Activated B cell treated with CpG ODN at 0.5 μM for 24 hours (primary cell): ENCODE measurements at regions of chr1 and their contacts with region 1.

Region 1: GRCh38 chr1:235933017-235933765 is 66.5 kb upstream of the LYST start:
- DNase-seq: no peak
- ATAC-seq: no peak
- H3K4me3 Mint-ChIP-seq: peak overlapping the region; percentile 62
- H3K27ac Mint-ChIP-seq: peak overlapping the region; percentile 72
- H3K4me1 Mint-ChIP-seq: peaks cover 91% of the 10 kb centered on the region
- H3K27me3 Mint-ChIP-seq: no peaks in the 10 kb centered on the region
- CTCF ChIP-seq: no peak

Region 2: DNA sequence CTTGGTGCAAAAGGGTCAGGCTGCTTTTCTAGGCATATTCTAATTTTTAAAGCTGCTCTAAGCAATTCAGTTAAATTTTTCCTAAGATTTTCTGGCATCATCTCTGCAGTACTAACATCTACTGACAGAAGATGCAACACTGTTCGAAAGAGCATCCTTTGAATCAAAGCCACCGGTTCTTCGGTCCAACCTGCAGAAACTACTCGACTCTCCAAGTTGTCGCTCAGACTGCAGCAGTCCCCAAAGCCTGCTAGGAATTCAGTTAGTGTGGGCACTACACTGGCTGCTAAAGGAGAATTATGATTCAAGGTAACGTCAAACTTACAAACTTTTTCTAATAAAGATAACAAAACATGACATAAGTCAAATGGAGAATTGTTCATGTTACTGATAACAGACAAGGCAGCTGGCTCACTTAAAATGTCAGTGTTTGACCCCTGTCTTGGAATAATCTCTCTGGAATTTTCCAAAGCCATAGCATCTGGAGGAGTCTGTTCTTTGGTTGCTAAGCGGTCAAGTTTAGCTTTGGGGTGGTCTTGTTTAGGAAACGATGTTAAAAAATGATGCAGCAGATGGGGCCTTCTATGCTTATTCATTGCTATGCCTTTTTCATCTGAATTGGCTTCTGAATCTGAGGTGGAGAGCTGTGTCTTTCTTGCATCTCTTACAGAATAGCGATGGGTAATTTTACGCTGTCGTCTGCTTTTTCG is 123.3 kb before region 1 on chr1:
- CTCF ChIA-PET with region 1: no interaction called
- POLR2A ChIA-PET with region 1: no interaction called
- intact Hi-C with region 1: no loop called
- DNase-seq: no peak
- ATAC-seq: no peak
- H3K4me3 Mint-ChIP-seq: no peak overlapping the region
- H3K27ac Mint-ChIP-seq: no peak overlapping the region
- H3K4me1 Mint-ChIP-seq: no peaks in the 10 kb centered on the region
- H3K27me3 Mint-ChIP-seq: no peaks in the 10 kb centered on the region
- CTCF ChIP-seq: no peak

Region 3: GRCh38 chr1:235883261-235883927 is 49.8 kb before region 1 on chr1:
- CTCF ChIA-PET with region 1: no interaction called
- POLR2A ChIA-PET with region 1: no interaction called
- intact Hi-C with region 1: loop called (anchors 2 kb)
- DNase-seq: no peak
- ATAC-seq: peak; percentile 15
- H3K4me3 Mint-ChIP-seq: no peak overlapping the region
- H3K27ac Mint-ChIP-seq: no peak overlapping the region
- H3K4me1 Mint-ChIP-seq: peaks cover 59% of the 10 kb centered on the region
- H3K27me3 Mint-ChIP-seq: no peaks in the 10 kb centered on the region
- CTCF ChIP-seq: no peak

Region 4: DNA sequence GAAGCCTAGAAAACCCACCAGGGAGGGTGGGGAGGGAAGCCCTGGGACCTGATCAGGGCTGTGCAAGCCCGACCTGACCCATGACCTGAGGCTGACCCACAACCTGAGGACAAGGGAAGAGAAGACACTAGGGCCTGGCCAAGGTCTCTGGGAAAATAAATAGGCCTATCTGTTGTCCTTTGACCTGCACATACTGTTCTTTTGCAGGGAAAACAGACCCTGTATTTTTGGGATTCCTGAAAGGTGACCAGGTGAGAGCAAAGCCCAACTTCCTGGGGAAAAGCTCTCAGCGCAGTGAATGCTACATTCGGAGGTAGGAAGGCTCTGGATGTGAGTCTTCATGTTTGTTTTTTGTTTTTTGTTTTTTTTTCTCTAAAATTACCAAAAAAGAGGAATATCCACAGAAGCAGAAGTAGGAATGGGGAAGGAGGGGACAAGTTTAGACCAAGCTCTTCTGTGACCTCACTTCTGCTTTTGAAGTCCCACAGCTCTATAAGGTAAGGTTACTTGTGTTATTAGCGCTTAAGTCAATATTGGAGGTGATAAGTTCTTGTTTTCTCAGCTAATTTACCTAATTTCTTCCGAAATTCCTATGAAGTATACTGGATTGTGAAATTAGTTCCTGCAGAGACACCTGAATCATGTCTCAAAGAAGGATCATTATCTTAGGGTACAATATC is 40.3 kb before region 1 on chr1:
- CTCF ChIA-PET with region 1: no interaction called
- POLR2A ChIA-PET with region 1: interaction called, 5 read pairs
- intact Hi-C with region 1: loop called (anchors 2 kb)
- DNase-seq: no peak
- ATAC-seq: peak; percentile 69
- H3K4me3 Mint-ChIP-seq: no peak overlapping the region
- H3K27ac Mint-ChIP-seq: no peak overlapping the region
- H3K4me1 Mint-ChIP-seq: peaks cover 34% of the 10 kb centered on the region
- H3K27me3 Mint-ChIP-seq: no peaks in the 10 kb centered on the region
- CTCF ChIP-seq: no peak

Region 5: GRCh38 chr1:235917267-235917811 is 15.9 kb before region 1 on chr1:
- CTCF ChIA-PET with region 1: no interaction called
- POLR2A ChIA-PET with region 1: interaction called, 10 read pairs
- intact Hi-C with region 1: loop called (anchors 2 kb)
- DNase-seq: no peak
- ATAC-seq: peak; percentile 90
- H3K4me3 Mint-ChIP-seq: no peak overlapping the region
- H3K27ac Mint-ChIP-seq: peak overlapping the region; percentile 68
- H3K4me1 Mint-ChIP-seq: peaks cover 38% of the 10 kb centered on the region
- H3K27me3 Mint-ChIP-seq: no peaks in the 10 kb centered on the region
- CTCF ChIP-seq: no peak

Region 6: GRCh38 chr1:236201786-236202185 is 268.6 kb after region 1 on chr1:
- CTCF ChIA-PET with region 1: no interaction called
- POLR2A ChIA-PET with region 1: no interaction called
- intact Hi-C with region 1: no loop called
- DNase-seq: no peak
- ATAC-seq: no peak
- H3K4me3 Mint-ChIP-seq: no peak overlapping the region
- H3K27ac Mint-ChIP-seq: no peak overlapping the region
- H3K4me1 Mint-ChIP-seq: no peaks in the 10 kb centered on the region
- H3K27me3 Mint-ChIP-seq: no peaks in the 10 kb centered on the region
- CTCF ChIP-seq: no peak